ENCODE measurements at regions of chr17 and their contacts with region 1.

Region 1: DNA sequence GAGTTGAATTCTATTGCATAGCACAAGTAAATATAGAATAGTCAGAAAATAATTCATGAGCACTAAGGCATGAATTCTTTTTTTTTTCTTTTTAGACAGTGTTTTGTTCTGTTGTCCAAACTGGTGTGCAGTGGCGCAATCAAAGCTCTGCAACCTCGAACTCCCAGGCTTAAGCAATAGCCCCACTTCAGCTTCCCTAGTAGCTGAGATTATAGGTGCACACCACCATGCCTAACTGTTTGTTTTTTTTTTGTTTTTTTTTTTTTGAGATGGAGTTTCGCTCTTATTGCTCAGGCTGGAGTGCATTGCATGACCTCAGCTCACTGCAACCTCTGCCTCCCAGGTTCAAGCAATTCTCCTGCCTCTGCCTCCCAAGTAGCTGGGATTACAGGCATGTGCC is 16.6 kb downstream of the TUBD1 start:
- DNase-seq: no peak
- H3K4me3 ChIP-seq: no peak overlapping the region
- H3K27ac ChIP-seq: no peak overlapping the region
- H3K4me1 ChIP-seq: no peaks in the 10 kb centered on the region
- H3K27me3 ChIP-seq: no peaks in the 10 kb centered on the region
- CTCF ChIP-seq: no peak
- POLR2A ChIP-seq: no peak

Region 2: GRCh38 chr17:59746849-59747445 is 129.2 kb before region 1 on chr17:
- CTCF ChIA-PET with region 1: interaction called, 3 read pairs
- POLR2A ChIA-PET with region 1: no interaction called
- dilution Hi-C with region 1: loop called (anchors 10 kb)
- intact Hi-C with region 1: no loop called
- DNase-seq: peak; percentile 68
- H3K4me3 ChIP-seq: no peak overlapping the region
- H3K27ac ChIP-seq: no peak overlapping the region
- H3K4me1 ChIP-seq: no peaks in the 10 kb centered on the region
- H3K27me3 ChIP-seq: no peaks in the 10 kb centered on the region
- CTCF ChIP-seq: peak; percentile 30 to 43
- POLR2A ChIP-seq: no peak

Region 3: GRCh38 chr17:59837308-59838051 is 38.6 kb before region 1 on chr17:
- CTCF ChIA-PET with region 1: no interaction called
- POLR2A ChIA-PET with region 1: no interaction called
- dilution Hi-C with region 1: no loop called
- intact Hi-C with region 1: no loop called
- DNase-seq: peak; percentile 99
- H3K4me3 ChIP-seq: peak overlapping the region; percentile 76 to 100 (median 99)
- H3K27ac ChIP-seq: peak overlapping the region; percentile 100
- H3K4me1 ChIP-seq: peaks cover 13% of the 10 kb centered on the region
- H3K27me3 ChIP-seq: no peaks in the 10 kb centered on the region
- CTCF ChIP-seq: no peak
- POLR2A ChIP-seq: peak; percentile 100